Prostate gland (tissue), 2 donors: ENCODE measurements at regions of chr22 and their contacts with region 1.

Region 1: GRCh38 chr22:29306175-29306834 is at the start of gene GAS2L1:
- DNase-seq: peak; percentile 83
- H3K4me3 ChIP-seq: peak within 1 kb of the TSS; percentile 59 to 97
- H3K27ac ChIP-seq: peak within 1 kb of the TSS; percentile 56 to 89
- H3K4me1 ChIP-seq: peaks cover 27% of the 10 kb centered on the region
- H3K27me3 ChIP-seq: no peaks in the 10 kb centered on the region
- CTCF ChIP-seq: peak; percentile 57 to 88 (median 81)
- POLR2A ChIP-seq: no peak
- total RNA-seq, gene GAS2L1: 85.8 to 159 TPM

Region 2: DNA sequence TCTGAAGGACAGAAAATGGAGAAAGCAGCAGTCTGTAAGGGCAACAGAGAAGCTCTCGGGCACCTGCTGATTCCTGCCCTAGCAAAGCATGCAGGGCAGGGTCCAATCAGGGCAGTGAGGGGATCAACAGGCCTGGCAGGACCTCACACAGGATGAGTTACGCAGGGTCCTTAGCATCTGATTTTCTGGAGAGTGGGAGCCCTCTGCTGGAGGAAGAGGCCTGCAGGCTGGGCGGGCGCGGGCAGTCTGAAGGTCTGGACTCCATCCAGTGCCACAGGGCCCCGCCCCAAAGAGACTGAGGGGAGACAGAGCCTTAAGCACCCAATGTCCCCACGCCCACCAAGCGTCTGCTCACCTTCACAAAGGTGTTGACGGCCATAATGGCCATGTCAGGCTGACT is 53.2 kb after region 1 on chr22:
- intact Hi-C with region 1: loop called (anchors 2 kb)
- DNase-seq: peak; percentile 64
- H3K4me3 ChIP-seq: no peak overlapping the region
- H3K27ac ChIP-seq: peak overlapping the region; percentile 37 to 66
- H3K4me1 ChIP-seq: peaks cover 10% of the 10 kb centered on the region
- H3K27me3 ChIP-seq: no peaks in the 10 kb centered on the region
- CTCF ChIP-seq: peak; percentile 43 to 79 (median 66)
- POLR2A ChIP-seq: no peak

Region 3: GRCh38 chr22:29387921-29388758 is 81.8 kb after region 1 on chr22 and contains the start of gene AP1B1:
- intact Hi-C with region 1: loop called (anchors 1 kb)
- DNase-seq: peak; percentile 90
- H3K4me3 ChIP-seq: peak within 1 kb of the TSS; percentile 70 to 71
- H3K27ac ChIP-seq: peak within 1 kb of the TSS; percentile 84 to 85
- H3K4me1 ChIP-seq: peaks cover 12% of the 10 kb centered on the region
- H3K27me3 ChIP-seq: no peaks in the 10 kb centered on the region
- CTCF ChIP-seq: peak in 2 of 4 experiments; percentile 16 to 19
- POLR2A ChIP-seq: peak; percentile 62
- total RNA-seq, gene AP1B1: 104 to 143 TPM